H1 (cell line): ENCODE measurements at regions of chr17 and their contacts with region 1.

Region 1: DNA sequence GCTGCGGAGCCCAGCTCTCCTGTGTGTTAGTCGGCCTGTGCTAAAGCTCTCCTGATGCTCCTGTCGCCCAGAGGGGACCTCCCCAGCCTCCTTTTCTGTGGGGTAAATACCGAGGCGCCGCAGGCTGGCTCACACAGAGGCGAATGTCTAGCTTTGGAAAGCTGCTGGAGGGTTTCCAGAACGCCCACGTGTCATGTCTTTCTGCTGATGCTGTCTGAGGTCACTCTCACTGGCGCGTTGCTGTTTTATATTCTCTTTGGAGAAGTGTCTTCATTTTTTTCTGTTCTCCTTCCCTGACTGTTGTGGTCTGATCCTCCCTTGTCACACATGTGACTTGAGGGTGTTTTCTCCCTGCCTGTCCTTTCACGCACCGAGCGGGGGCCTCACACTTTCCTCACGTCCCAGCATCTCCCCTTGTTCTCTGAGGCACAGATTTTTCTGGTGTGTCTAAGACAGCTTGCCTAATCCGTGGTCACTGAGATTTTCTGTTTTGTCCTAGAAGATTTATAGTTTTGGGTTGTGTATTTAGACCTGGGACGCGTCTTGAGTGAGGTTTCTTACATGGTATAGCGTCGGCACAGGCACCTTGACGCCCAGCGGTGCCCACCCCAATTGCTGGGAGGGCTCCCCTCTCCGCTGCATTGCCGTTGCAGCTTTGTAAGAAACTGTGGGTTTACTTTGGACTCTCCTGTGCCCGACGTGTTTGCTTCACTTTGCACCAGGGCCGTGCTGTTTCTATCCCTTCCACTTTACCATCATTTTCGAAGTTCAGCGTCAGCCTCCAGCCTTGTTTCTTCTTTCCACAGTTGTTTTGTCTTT is 92.1 kb upstream of the ZNF750 start:
- DNase-seq: no peak
- H3K4me3 ChIP-seq: no peak overlapping the region
- H3K27ac ChIP-seq: no peak overlapping the region
- H3K4me1 ChIP-seq: no peaks in the 10 kb centered on the region
- H3K27me3 ChIP-seq: no peaks in the 10 kb centered on the region
- CTCF ChIP-seq: no peak
- EP300 ChIP-seq: no peak
- POLR2A ChIP-seq: no peak
- RAD21 ChIP-seq: no peak

Region 2: GRCh38 chr17:82767041-82767754 is 164.7 kb before region 1 on chr17:
- CTCF ChIA-PET with region 1: no interaction called
- POLR2A ChIA-PET with region 1: no interaction called
- DNase-seq: peak in 1 of 2 experiments; percentile 87
- H3K4me3 ChIP-seq: no peak overlapping the region
- H3K27ac ChIP-seq: no peak overlapping the region
- H3K4me1 ChIP-seq: no peaks in the 10 kb centered on the region
- H3K27me3 ChIP-seq: no peaks in the 10 kb centered on the region
- CTCF ChIP-seq: peak; percentile 56 to 71 (median 68)
- EP300 ChIP-seq: no peak
- POLR2A ChIP-seq: no peak
- RAD21 ChIP-seq: peak; percentile 78 to 83

Region 3: DNA sequence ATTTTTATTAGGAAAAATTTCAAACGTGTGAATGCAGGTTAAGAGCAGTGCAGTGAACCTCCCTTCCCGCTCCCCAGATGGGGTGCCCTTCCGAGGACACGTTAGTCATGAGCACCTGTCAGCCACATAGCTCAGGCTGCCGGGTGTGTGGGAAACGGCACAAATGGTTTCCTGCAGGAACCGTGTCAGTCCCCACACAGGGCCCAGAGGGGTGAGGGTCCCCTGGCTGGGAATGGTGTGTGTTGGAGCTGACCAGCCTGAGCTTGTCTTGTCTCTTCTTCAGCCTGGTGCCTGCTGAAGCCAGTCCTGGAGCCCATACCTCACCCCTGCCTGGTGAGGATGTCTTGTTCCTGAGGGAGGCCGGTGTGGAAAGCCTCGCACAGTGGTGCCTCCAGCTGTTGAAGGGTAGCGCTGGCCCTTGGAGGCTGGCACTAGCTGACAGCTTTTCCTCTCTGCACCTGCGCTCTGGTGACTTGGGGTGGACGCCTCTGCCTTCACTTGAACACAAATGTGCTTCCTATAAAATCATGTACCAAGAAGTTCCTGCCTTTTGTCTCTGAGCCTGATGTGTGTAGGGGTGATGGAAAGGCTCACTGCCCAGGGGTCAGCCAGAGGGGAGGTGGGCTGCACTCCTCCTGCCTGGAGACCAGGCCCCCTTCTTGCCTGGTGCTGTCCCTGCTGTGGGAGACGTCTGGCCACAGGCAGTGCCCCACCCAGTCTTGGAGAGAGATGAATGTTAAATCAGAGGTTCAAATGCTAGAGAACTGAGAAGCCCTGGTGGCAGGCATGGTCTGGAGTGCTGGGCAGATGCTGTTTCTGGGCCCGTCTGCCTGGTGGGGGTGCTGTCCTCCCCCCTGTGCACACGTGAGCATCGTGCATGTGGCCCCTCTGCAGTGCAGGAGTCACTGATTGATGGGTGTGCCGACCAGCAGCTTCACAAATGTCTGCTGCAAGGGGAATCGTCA is 10.5 kb after region 1 on chr17:
- CTCF ChIA-PET with region 1: interaction called, 12 read pairs
- POLR2A ChIA-PET with region 1: interaction called, 3 read pairs
- DNase-seq: no peak
- H3K4me3 ChIP-seq: no peak overlapping the region
- H3K27ac ChIP-seq: no peak overlapping the region
- H3K4me1 ChIP-seq: no peaks in the 10 kb centered on the region
- H3K27me3 ChIP-seq: no peaks in the 10 kb centered on the region
- CTCF ChIP-seq: no peak
- EP300 ChIP-seq: no peak
- POLR2A ChIP-seq: no peak
- RAD21 ChIP-seq: no peak

Region 4: DNA sequence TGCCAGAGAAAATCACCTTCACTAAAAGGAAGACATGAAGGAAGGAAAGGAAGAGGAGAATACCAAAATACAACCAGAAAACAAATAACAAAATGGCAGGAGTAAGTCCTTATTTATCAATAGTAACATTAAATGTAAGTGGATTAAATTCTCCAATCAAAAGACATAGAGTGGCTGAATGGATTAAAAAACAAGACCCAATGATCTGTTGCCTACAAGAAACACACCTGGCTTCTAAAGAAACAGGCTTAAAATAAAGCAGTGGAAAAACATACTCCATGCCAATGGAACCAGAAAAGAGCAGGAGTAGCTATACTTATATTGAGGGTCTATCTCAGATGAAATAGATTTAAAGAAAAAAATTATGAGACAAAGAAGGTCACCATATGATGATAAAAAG is 61.1 kb after region 1 on chr17:
- CTCF ChIA-PET with region 1: no interaction called
- POLR2A ChIA-PET with region 1: no interaction called
- DNase-seq: no peak
- H3K4me3 ChIP-seq: no peak overlapping the region
- H3K27ac ChIP-seq: no peak overlapping the region
- H3K4me1 ChIP-seq: no peaks in the 10 kb centered on the region
- H3K27me3 ChIP-seq: no peaks in the 10 kb centered on the region
- CTCF ChIP-seq: no peak
- EP300 ChIP-seq: no peak
- POLR2A ChIP-seq: no peak
- RAD21 ChIP-seq: no peak